Heart left ventricle (tissue), 16 donors: ENCODE measurements at regions of chr11 and their contacts with region 1.

Region 1: GRCh38 chr11:100687630-100688395 is 725 bp downstream of the ARHGAP42 start:
- DNase-seq: peak in 4 of 5 donors; percentile 54 to 59 (median 56)
- ATAC-seq: peak; percentile 45 to 77 (median 70)
- H3K4me3 ChIP-seq: peak overlapping the region; percentile 62 to 87 (median 74)
- H3K27ac ChIP-seq: peak overlapping the region; percentile 69 to 89 (median 82)
- H3K4me1 ChIP-seq: peaks cover 0 to 40% (median 13%) of the 10 kb centered on the region in 12 donors
- H3K27me3 ChIP-seq: peaks cover 0 to 7% (median 0%) of the 10 kb centered on the region in 9 donors
- CTCF ChIP-seq: peak; percentile 46 to 75 (median 60)
- POLR2A ChIP-seq: no peak

Region 2: DNA sequence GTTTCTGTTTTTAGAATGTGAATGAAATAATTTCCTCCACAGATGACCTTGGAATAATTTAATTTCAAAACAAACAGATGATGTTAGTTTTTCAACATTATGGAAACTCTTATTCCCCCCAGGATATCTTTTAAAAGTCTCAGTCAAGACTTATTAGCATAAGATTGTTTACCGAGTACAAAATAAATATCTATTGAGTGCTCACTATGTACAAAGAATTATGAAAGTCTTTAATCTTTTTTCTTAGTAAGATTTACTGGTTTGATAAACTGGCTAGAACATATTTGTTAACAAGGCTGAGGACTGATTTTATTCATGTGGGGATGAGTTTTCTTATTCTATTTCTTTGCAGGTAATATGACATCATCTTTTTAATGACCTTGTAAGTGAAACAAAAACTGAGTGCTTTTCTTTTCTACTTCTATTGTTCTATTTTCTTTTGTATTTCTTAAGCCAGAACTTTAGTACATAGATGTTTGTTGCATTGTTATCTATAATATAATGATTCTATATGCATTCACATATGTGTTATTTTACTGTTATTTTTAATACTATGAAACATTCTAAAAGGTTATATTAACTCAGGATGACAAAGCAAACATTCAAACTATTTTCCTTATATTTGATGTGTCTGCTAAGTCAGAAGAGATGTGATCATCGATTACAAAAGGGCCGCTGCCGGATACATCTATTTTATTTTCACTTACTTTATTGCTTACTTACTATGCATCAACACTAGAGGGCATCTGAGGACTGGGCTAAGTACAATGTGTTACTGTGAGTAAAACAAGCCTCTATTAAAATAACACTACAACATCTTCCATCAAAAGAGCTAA is 111.7 kb before region 1 on chr11:
- intact Hi-C with region 1: loop called in 9 of 10 experiments (anchors 2 to 10 kb)
- DNase-seq: peak in 1 of 5 donors; percentile 12
- ATAC-seq: peak in 3 of 4 donors; percentile 77 to 84 (median 80)
- H3K4me3 ChIP-seq: peak overlapping the region in 3 of 12 donors; percentile 17 to 27 (median 26)
- H3K27ac ChIP-seq: no peak overlapping the region
- H3K4me1 ChIP-seq: peaks cover 0 to 4% (median 0%) of the 10 kb centered on the region in 12 donors
- H3K27me3 ChIP-seq: no peaks in the 10 kb centered on the region
- CTCF ChIP-seq: peak; percentile 67 to 90 (median 73)
- POLR2A ChIP-seq: no peak

Region 3: GRCh38 chr11:100719809-100720221 is 32.0 kb after region 1 on chr11:
- intact Hi-C with region 1: loop called in 2 of 10 experiments (anchors 5 kb)
- DNase-seq: peak in 4 of 5 donors; percentile 54 to 75 (median 66)
- ATAC-seq: peak; percentile 91 to 98 (median 95)
- H3K4me3 ChIP-seq: peak overlapping the region in 2 of 12 donors; percentile 1 to 10
- H3K27ac ChIP-seq: peak overlapping the region; percentile 11 to 78 (median 65)
- H3K4me1 ChIP-seq: peaks cover 7 to 37% (median 21%) of the 10 kb centered on the region in 12 donors
- H3K27me3 ChIP-seq: no peaks in the 10 kb centered on the region
- CTCF ChIP-seq: no peak
- POLR2A ChIP-seq: no peak

Region 4: DNA sequence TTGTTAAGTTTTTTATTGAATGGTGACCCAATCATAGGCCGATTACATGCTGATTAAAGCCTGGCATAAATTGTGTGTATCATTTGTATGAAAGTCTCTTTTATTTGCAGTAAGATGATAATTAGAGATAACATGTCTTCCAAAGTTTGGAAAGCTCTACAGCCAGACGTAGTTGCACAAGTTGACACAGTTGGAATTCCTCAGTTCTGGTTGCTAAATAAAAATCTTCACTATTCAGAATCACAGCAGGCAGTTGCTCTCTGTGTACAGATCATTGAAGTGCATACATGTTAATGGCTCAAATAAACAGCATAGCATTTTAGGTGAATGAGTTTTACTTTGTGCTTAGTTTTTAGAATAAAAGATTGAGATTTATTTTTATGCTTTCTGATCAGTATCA is 68.7 kb after region 1 on chr11:
- intact Hi-C with region 1: loop called in 1 of 10 experiments (anchors 5 kb)
- DNase-seq: no peak
- ATAC-seq: no peak
- H3K4me3 ChIP-seq: no peak overlapping the region
- H3K27ac ChIP-seq: no peak overlapping the region
- H3K4me1 ChIP-seq: peaks cover 0 to 62% (median 20%) of the 10 kb centered on the region in 12 donors
- H3K27me3 ChIP-seq: no peaks in the 10 kb centered on the region
- CTCF ChIP-seq: no peak
- POLR2A ChIP-seq: no peak

Region 5: GRCh38 chr11:100827934-100828661 is 140.3 kb after region 1 on chr11:
- intact Hi-C with region 1: loop called in 1 of 10 experiments (anchors 10 kb)
- DNase-seq: no peak
- ATAC-seq: no peak
- H3K4me3 ChIP-seq: no peak overlapping the region
- H3K27ac ChIP-seq: no peak overlapping the region
- H3K4me1 ChIP-seq: peaks cover 0 to 50% (median 23%) of the 10 kb centered on the region in 12 donors
- H3K27me3 ChIP-seq: no peaks in the 10 kb centered on the region
- CTCF ChIP-seq: peak in 1 of 12 donors; percentile 4
- POLR2A ChIP-seq: no peak